ENCODE measurements at regions of chr20 and their contacts with region 1.

Region 1: GRCh38 chr20:46544576-46544975 is 5.9 kb downstream of the OCSTAMP start:
- DNase-seq: no peak
- ATAC-seq: no peak
- H3K4me3 ChIP-seq: no peak overlapping the region
- H3K4me3 Mint-ChIP-seq: no peak overlapping the region
- H3K27ac ChIP-seq: no peak overlapping the region
- H3K27ac Mint-ChIP-seq: no peak overlapping the region
- H3K4me1 ChIP-seq: peaks cover 4 to 18% of the 10 kb centered on the region in 2 experiments
- H3K4me1 Mint-ChIP-seq: peaks cover 0 to 8% (median 6%) of the 10 kb centered on the region in 3 donors
- H3K27me3 ChIP-seq: peaks cover 2 to 12% of the 10 kb centered on the region in 2 experiments
- H3K27me3 Mint-ChIP-seq: peaks cover 5 to 12% of the 10 kb centered on the region in 2 donors

Region 2: DNA sequence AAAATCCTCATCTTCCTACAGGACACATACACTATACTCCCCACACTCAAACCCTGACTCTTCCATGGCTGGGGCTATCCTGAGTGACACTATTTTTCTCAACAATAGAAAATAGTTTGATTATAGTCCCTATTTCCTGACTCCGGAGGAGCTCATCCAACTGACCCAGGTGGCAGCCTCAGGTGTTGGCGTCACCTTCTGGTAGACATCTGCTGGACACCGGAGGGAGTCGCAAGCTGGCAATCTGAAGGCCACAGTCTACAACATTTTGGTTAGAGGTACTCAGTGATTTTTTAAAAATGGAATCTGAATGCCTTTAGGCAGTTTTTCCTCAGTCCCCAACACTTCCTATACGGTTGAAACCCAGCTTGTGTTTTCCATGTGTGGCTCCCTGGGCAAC is 38.1 kb after region 1 on chr20:
- CTCF ChIA-PET with region 1: no interaction called
- POLR2A ChIA-PET with region 1: interaction called in 1 of 2 experiments, 10 read pairs
- DNase-seq: no peak
- ATAC-seq: no peak
- H3K4me3 ChIP-seq: no peak overlapping the region
- H3K4me3 Mint-ChIP-seq: no peak overlapping the region
- H3K27ac ChIP-seq: no peak overlapping the region
- H3K27ac Mint-ChIP-seq: no peak overlapping the region
- H3K4me1 ChIP-seq: no peaks in the 10 kb centered on the region
- H3K4me1 Mint-ChIP-seq: no peaks in the 10 kb centered on the region
- H3K27me3 ChIP-seq: peaks cover 2 to 12% of the 10 kb centered on the region in 2 experiments
- H3K27me3 Mint-ChIP-seq: peaks cover 9 to 12% of the 10 kb centered on the region in 2 donors